ENCODE measurements at regions of chr12 and their contacts with region 1.

Region 1: GRCh38 chr12:89494411-89495231 is 30.0 kb downstream of the GALNT4 start:
- DNase-seq: peak; percentile 72
- ATAC-seq: peak; percentile 90
- H3K4me3 Mint-ChIP-seq: peak overlapping the region; percentile 28
- H3K27ac Mint-ChIP-seq: peak overlapping the region; percentile 92
- H3K4me1 Mint-ChIP-seq: peaks cover 27% of the 10 kb centered on the region
- H3K27me3 Mint-ChIP-seq: no peaks in the 10 kb centered on the region

Region 2: GRCh38 chr12:89092297-89092696 is 402.3 kb before region 1 on chr12:
- CTCF ChIA-PET with region 1: no interaction called
- POLR2A ChIA-PET with region 1: no interaction called
- intact Hi-C with region 1: loop called in 1 of 2 experiments (anchors 1 kb)
- DNase-seq: peak; percentile 53
- ATAC-seq: peak; percentile 90
- H3K4me3 Mint-ChIP-seq: no peak overlapping the region
- H3K27ac Mint-ChIP-seq: peak overlapping the region; percentile 85
- H3K4me1 Mint-ChIP-seq: peaks cover 27% of the 10 kb centered on the region
- H3K27me3 Mint-ChIP-seq: no peaks in the 10 kb centered on the region

Region 3: GRCh38 chr12:89154743-89155499 is 339.7 kb before region 1 on chr12:
- CTCF ChIA-PET with region 1: no interaction called
- POLR2A ChIA-PET with region 1: no interaction called
- intact Hi-C with region 1: no loop called
- DNase-seq: no peak
- ATAC-seq: no peak
- H3K4me3 Mint-ChIP-seq: no peak overlapping the region
- H3K27ac Mint-ChIP-seq: no peak overlapping the region
- H3K4me1 Mint-ChIP-seq: peaks cover 24% of the 10 kb centered on the region
- H3K27me3 Mint-ChIP-seq: no peaks in the 10 kb centered on the region

Region 4: GRCh38 chr12:89288959-89289358 is 205.7 kb before region 1 on chr12:
- CTCF ChIA-PET with region 1: no interaction called
- POLR2A ChIA-PET with region 1: no interaction called
- intact Hi-C with region 1: no loop called
- DNase-seq: no peak
- ATAC-seq: peak; percentile 53
- H3K4me3 Mint-ChIP-seq: no peak overlapping the region
- H3K27ac Mint-ChIP-seq: no peak overlapping the region
- H3K4me1 Mint-ChIP-seq: peaks cover 4% of the 10 kb centered on the region
- H3K27me3 Mint-ChIP-seq: no peaks in the 10 kb centered on the region

Region 5: GRCh38 chr12:89470741-89471509 is 23.7 kb before region 1 on chr12:
- CTCF ChIA-PET with region 1: interaction called, 10 read pairs
- POLR2A ChIA-PET with region 1: no interaction called
- intact Hi-C with region 1: loop called (anchors 1 kb)
- DNase-seq: peak; percentile 14
- ATAC-seq: peak; percentile 57
- H3K4me3 Mint-ChIP-seq: no peak overlapping the region
- H3K27ac Mint-ChIP-seq: peak overlapping the region; percentile 69
- H3K4me1 Mint-ChIP-seq: peaks cover 57% of the 10 kb centered on the region
- H3K27me3 Mint-ChIP-seq: no peaks in the 10 kb centered on the region

Region 6: GRCh38 chr12:89481213-89481914 is 13.3 kb before region 1 on chr12:
- CTCF ChIA-PET with region 1: no interaction called
- POLR2A ChIA-PET with region 1: no interaction called
- intact Hi-C with region 1: no loop called
- DNase-seq: no peak
- ATAC-seq: no peak
- H3K4me3 Mint-ChIP-seq: no peak overlapping the region
- H3K27ac Mint-ChIP-seq: no peak overlapping the region
- H3K4me1 Mint-ChIP-seq: peaks cover 7% of the 10 kb centered on the region
- H3K27me3 Mint-ChIP-seq: no peaks in the 10 kb centered on the region

Region 7: GRCh38 chr12:90280564-90281058 is 786.0 kb after region 1 on chr12:
- CTCF ChIA-PET with region 1: no interaction called
- POLR2A ChIA-PET with region 1: no interaction called
- intact Hi-C with region 1: loop called in 1 of 2 experiments (anchors 1 kb)
- DNase-seq: peak; percentile 33
- ATAC-seq: peak; percentile 74
- H3K4me3 Mint-ChIP-seq: no peak overlapping the region
- H3K27ac Mint-ChIP-seq: peak overlapping the region; percentile 11
- H3K4me1 Mint-ChIP-seq: peaks cover 28% of the 10 kb centered on the region
- H3K27me3 Mint-ChIP-seq: peaks cover 16% of the 10 kb centered on the region

Measured in activated CD4-positive, alpha-beta T cell treated with anti-CD3 and anti-CD28 coated beads for 36 hours (primary cell).